ENCODE measurements at regions of chr12 and their contacts with region 1.

Region 1: GRCh38 chr12:57865090-57865751 is 18.7 kb upstream of the CTDSP2 start:
- DNase-seq: peak; percentile 81
- H3K4me3 Mint-ChIP-seq: peak overlapping the region; percentile 69
- H3K27ac Mint-ChIP-seq: peak overlapping the region; percentile 82
- H3K4me1 Mint-ChIP-seq: peaks cover 23% of the 10 kb centered on the region
- H3K27me3 Mint-ChIP-seq: no peaks in the 10 kb centered on the region
- CTCF ChIP-seq: no peak

Region 2: GRCh38 chr12:57836442-57837375 is 28.5 kb before region 1 on chr12:
- CTCF ChIA-PET with region 1: interaction called, 3 read pairs
- POLR2A ChIA-PET with region 1: interaction called, 17 read pairs
- intact Hi-C with region 1: no loop called
- DNase-seq: peak; percentile 60
- H3K4me3 Mint-ChIP-seq: peak overlapping the region; percentile 46
- H3K27ac Mint-ChIP-seq: peak overlapping the region; percentile 59
- H3K4me1 Mint-ChIP-seq: peaks cover 41% of the 10 kb centered on the region
- H3K27me3 Mint-ChIP-seq: no peaks in the 10 kb centered on the region
- CTCF ChIP-seq: no peak

Region 3: GRCh38 chr12:57881475-57881874 is 16.3 kb after region 1 on chr12:
- CTCF ChIA-PET with region 1: interaction called, 6 read pairs
- POLR2A ChIA-PET with region 1: interaction called, 17 read pairs
- intact Hi-C with region 1: no loop called
- DNase-seq: no peak
- H3K4me3 Mint-ChIP-seq: no peak overlapping the region
- H3K27ac Mint-ChIP-seq: no peak overlapping the region
- H3K4me1 Mint-ChIP-seq: peaks cover 11% of the 10 kb centered on the region
- H3K27me3 Mint-ChIP-seq: no peaks in the 10 kb centered on the region
- CTCF ChIP-seq: no peak

Region 4: GRCh38 chr12:57888409-57889157 is 23.4 kb after region 1 on chr12:
- CTCF ChIA-PET with region 1: interaction called, 12 read pairs
- POLR2A ChIA-PET with region 1: interaction called, 88 read pairs
- intact Hi-C with region 1: loop called (anchors 1 kb)
- DNase-seq: peak; percentile 90
- H3K4me3 Mint-ChIP-seq: peak overlapping the region; percentile 63
- H3K27ac Mint-ChIP-seq: peak overlapping the region; percentile 91
- H3K4me1 Mint-ChIP-seq: peaks cover 49% of the 10 kb centered on the region
- H3K27me3 Mint-ChIP-seq: no peaks in the 10 kb centered on the region
- CTCF ChIP-seq: no peak

Region 5: GRCh38 chr12:57893431-57894353 is 28.5 kb after region 1 on chr12:
- CTCF ChIA-PET with region 1: interaction called, 12 read pairs
- POLR2A ChIA-PET with region 1: interaction called, 88 read pairs
- intact Hi-C with region 1: loop called (anchors 1 kb)
- DNase-seq: peak; percentile 54
- H3K4me3 Mint-ChIP-seq: peak overlapping the region; percentile 23
- H3K27ac Mint-ChIP-seq: peak overlapping the region; percentile 70
- H3K4me1 Mint-ChIP-seq: peaks cover 66% of the 10 kb centered on the region
- H3K27me3 Mint-ChIP-seq: no peaks in the 10 kb centered on the region
- CTCF ChIP-seq: no peak

Measured in MCF 10A (cell line).